Naive thymus-derived CD4-positive, alpha-beta T cell (primary cell): ENCODE measurements at regions of chr7 and their contacts with region 1.

Region 1: GRCh38 chr7:30062591-30062990 is 34.4 kb downstream of the PLEKHA8 start:
- DNase-seq: peak in 5 of 9 donors; percentile 17 to 36 (median 19)
- ATAC-seq: peak; percentile 76
- H3K4me3 ChIP-seq: no peak overlapping the region
- H3K4me3 Mint-ChIP-seq: no peak overlapping the region
- H3K27ac ChIP-seq: no peak overlapping the region
- H3K27ac Mint-ChIP-seq: no peak overlapping the region
- H3K4me1 ChIP-seq: no peaks in the 10 kb centered on the region
- H3K4me1 Mint-ChIP-seq: peaks cover 0 to 12% (median 6%) of the 10 kb centered on the region in 7 donors
- H3K27me3 ChIP-seq: no peaks in the 10 kb centered on the region
- H3K27me3 Mint-ChIP-seq: no peaks in the 10 kb centered on the region

Region 2: GRCh38 chr7:28921822-28922221 is 1140.8 kb before region 1 on chr7:
- CTCF ChIA-PET with region 1: no interaction called
- POLR2A ChIA-PET with region 1: no interaction called
- intact Hi-C with region 1: loop called (anchors 2 to 10 kb)
- DNase-seq: peak in 7 of 9 donors; percentile 17 to 56 (median 39)
- ATAC-seq: peak; percentile 88
- H3K4me3 ChIP-seq: no peak overlapping the region
- H3K4me3 Mint-ChIP-seq: peak overlapping the region in 1 of 10 donors; percentile 16
- H3K27ac ChIP-seq: no peak overlapping the region
- H3K27ac Mint-ChIP-seq: no peak overlapping the region
- H3K4me1 ChIP-seq: peaks cover 0 to 8% of the 10 kb centered on the region in 2 donors
- H3K4me1 Mint-ChIP-seq: peaks cover 0 to 23% (median 14%) of the 10 kb centered on the region in 7 donors
- H3K27me3 ChIP-seq: no peaks in the 10 kb centered on the region
- H3K27me3 Mint-ChIP-seq: peaks cover 0 to 22% (median 0%) of the 10 kb centered on the region in 5 donors

Region 3: GRCh38 chr7:28980451-28980891 is 1082.1 kb before region 1 on chr7:
- CTCF ChIA-PET with region 1: no interaction called
- POLR2A ChIA-PET with region 1: no interaction called
- intact Hi-C with region 1: no loop called
- DNase-seq: no peak
- ATAC-seq: no peak
- H3K4me3 ChIP-seq: no peak overlapping the region
- H3K4me3 Mint-ChIP-seq: no peak overlapping the region
- H3K27ac ChIP-seq: no peak overlapping the region
- H3K27ac Mint-ChIP-seq: no peak overlapping the region
- H3K4me1 ChIP-seq: no peaks in the 10 kb centered on the region
- H3K4me1 Mint-ChIP-seq: no peaks in the 10 kb centered on the region
- H3K27me3 ChIP-seq: no peaks in the 10 kb centered on the region
- H3K27me3 Mint-ChIP-seq: peaks cover 0 to 27% (median 24%) of the 10 kb centered on the region in 5 donors

Region 4: GRCh38 chr7:29748286-29749108 is 314.1 kb before region 1 on chr7:
- CTCF ChIA-PET with region 1: no interaction called
- POLR2A ChIA-PET with region 1: no interaction called
- intact Hi-C with region 1: loop called in 1 of 2 experiments (anchors 1 kb)
- DNase-seq: peak in 1 of 9 donors; percentile 5
- ATAC-seq: no peak
- H3K4me3 ChIP-seq: no peak overlapping the region
- H3K4me3 Mint-ChIP-seq: no peak overlapping the region
- H3K27ac ChIP-seq: no peak overlapping the region
- H3K27ac Mint-ChIP-seq: no peak overlapping the region
- H3K4me1 ChIP-seq: no peaks in the 10 kb centered on the region
- H3K4me1 Mint-ChIP-seq: no peaks in the 10 kb centered on the region
- H3K27me3 ChIP-seq: no peaks in the 10 kb centered on the region
- H3K27me3 Mint-ChIP-seq: peaks cover 0 to 21% (median 5%) of the 10 kb centered on the region in 5 donors

Region 5: DNA sequence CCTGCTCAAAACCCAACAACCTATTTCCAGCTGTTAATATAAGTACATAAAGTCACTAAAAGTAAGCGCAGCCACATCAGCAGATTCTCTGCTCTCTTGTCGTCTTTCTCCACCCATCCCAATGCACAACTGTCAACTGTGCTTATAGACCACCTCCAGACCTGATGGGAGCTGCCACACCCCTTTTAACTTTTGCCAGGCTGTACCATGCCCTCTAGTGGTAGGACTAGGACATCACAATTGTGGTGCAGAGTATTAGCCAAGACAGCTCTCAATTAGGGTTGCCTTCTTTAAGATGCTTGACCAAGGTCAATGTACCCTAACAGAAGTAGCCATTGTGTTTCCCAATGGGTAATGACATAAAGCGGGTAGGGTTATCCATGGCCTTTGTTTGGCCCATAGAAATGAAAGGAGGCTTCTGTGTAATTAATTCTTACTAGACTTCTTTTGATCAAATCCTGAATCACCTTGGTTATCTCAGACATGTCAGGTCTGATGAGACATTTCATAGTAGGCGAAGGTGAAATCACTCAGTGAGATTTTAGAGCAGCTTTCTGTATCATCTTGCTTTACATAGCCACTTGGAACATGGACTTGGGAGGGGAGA is 141.1 kb before region 1 on chr7:
- CTCF ChIA-PET with region 1: interaction called, 4 read pairs
- POLR2A ChIA-PET with region 1: no interaction called
- intact Hi-C with region 1: loop called (anchors 1 to 5 kb)
- DNase-seq: peak in 8 of 9 donors; percentile 11 to 55 (median 38)
- ATAC-seq: peak; percentile 93
- H3K4me3 ChIP-seq: no peak overlapping the region
- H3K4me3 Mint-ChIP-seq: no peak overlapping the region
- H3K27ac ChIP-seq: no peak overlapping the region
- H3K27ac Mint-ChIP-seq: no peak overlapping the region
- H3K4me1 ChIP-seq: no peaks in the 10 kb centered on the region
- H3K4me1 Mint-ChIP-seq: peaks cover 0 to 2% (median 0%) of the 10 kb centered on the region in 7 donors
- H3K27me3 ChIP-seq: no peaks in the 10 kb centered on the region
- H3K27me3 Mint-ChIP-seq: peaks cover 0 to 12% (median under 1%) of the 10 kb centered on the region in 5 donors

Region 6: GRCh38 chr7:30019387-30019786 is 43.2 kb before region 1 on chr7:
- CTCF ChIA-PET with region 1: interaction called, 5 read pairs
- POLR2A ChIA-PET with region 1: no interaction called
- intact Hi-C with region 1: loop called in 1 of 2 experiments (anchors 1 kb)
- DNase-seq: no peak
- ATAC-seq: no peak
- H3K4me3 ChIP-seq: no peak overlapping the region
- H3K4me3 Mint-ChIP-seq: no peak overlapping the region
- H3K27ac ChIP-seq: no peak overlapping the region
- H3K27ac Mint-ChIP-seq: no peak overlapping the region
- H3K4me1 ChIP-seq: no peaks in the 10 kb centered on the region
- H3K4me1 Mint-ChIP-seq: peaks cover 10 to 20% (median 13%) of the 10 kb centered on the region in 7 donors
- H3K27me3 ChIP-seq: no peaks in the 10 kb centered on the region
- H3K27me3 Mint-ChIP-seq: no peaks in the 10 kb centered on the region

Region 7: DNA sequence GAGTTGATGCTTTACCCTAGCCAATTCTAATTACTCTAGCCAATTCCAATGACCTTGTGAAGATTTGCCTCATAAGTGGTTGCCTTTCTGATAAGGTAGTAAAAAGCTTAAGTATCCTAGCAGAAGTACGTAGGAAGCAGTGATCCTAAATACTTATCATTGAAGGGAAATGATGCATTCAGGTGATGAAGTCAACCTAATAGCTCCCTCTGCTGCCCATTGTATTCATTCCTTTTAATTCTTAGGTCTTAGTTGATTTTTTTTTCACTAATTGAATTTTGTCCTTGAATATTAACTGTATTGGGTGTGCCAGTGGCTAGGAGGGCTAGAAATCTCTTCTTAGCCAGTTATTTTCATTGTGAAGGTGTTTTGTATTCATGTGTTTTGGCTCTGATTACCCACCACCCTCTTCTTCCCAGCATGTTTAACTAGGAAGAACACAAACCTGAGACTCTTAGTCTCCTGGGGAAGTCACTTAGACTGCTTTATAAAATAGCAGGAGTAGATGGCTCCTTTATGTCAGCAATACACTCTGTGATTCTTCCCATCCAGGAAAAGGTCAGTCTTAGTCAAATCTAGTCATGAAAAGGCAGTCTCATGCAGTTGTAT is 11.9 kb after region 1 on chr7:
- CTCF ChIA-PET with region 1: interaction called, 13 read pairs
- POLR2A ChIA-PET with region 1: no interaction called
- intact Hi-C with region 1: no loop called
- DNase-seq: peak in 3 of 9 donors; percentile 4 to 16 (median 11)
- ATAC-seq: no peak
- H3K4me3 ChIP-seq: no peak overlapping the region
- H3K4me3 Mint-ChIP-seq: no peak overlapping the region
- H3K27ac ChIP-seq: no peak overlapping the region
- H3K27ac Mint-ChIP-seq: no peak overlapping the region
- H3K4me1 ChIP-seq: no peaks in the 10 kb centered on the region
- H3K4me1 Mint-ChIP-seq: no peaks in the 10 kb centered on the region
- H3K27me3 ChIP-seq: no peaks in the 10 kb centered on the region
- H3K27me3 Mint-ChIP-seq: no peaks in the 10 kb centered on the region

Region 8: DNA sequence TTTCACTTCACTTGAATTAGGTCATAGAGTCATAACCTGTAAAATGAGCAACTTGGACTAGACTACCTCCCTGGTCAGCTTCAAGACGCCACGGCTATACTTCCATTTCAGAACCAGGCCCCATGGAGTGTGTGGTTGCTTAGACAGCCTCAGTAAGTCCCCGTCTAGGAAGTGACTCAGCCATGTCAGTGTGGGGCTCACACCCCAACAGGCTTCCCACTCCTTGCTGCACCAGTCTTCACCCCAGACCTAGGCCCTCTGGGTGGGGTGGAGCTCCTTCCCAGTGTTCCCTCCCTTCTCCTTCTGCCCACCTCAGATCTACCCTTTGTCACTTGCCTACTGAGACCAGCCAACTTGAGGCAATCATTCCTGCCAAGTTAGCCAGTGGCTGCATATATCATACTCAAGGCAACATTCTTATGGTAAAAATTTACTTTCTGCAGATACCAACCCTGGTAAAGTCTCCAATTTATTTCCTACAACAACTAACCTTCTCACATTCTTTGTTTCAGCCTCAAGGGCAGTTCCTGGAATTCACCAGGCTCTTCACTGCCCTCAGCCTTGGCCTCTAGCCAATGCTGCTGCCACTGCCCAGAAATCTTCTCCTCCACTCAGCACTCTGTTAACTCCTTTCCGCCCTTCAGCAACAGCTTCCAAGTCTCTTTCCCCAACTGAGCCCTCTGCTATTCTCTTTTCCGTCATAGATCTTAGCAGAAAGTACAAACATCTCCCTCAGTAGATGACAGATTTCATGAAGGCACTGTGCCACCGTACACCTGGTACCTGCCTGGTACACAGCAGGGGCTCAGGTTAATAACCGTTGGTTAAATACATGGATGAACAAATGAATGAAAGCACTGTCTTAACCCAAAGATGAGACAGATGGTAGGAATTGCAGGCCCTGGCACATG is 190.5 kb after region 1 on chr7:
- CTCF ChIA-PET with region 1: no interaction called
- POLR2A ChIA-PET with region 1: no interaction called
- intact Hi-C with region 1: no loop called
- DNase-seq: no peak
- ATAC-seq: peak; percentile 73
- H3K4me3 ChIP-seq: no peak overlapping the region
- H3K4me3 Mint-ChIP-seq: no peak overlapping the region
- H3K27ac ChIP-seq: no peak overlapping the region
- H3K27ac Mint-ChIP-seq: peak overlapping the region in 3 of 9 donors; percentile 5 to 76 (median 37)
- H3K4me1 ChIP-seq: peaks cover 0 to 10% of the 10 kb centered on the region in 2 donors
- H3K4me1 Mint-ChIP-seq: peaks cover 12 to 40% (median 26%) of the 10 kb centered on the region in 7 donors
- H3K27me3 ChIP-seq: no peaks in the 10 kb centered on the region
- H3K27me3 Mint-ChIP-seq: no peaks in the 10 kb centered on the region

Region 9: DNA sequence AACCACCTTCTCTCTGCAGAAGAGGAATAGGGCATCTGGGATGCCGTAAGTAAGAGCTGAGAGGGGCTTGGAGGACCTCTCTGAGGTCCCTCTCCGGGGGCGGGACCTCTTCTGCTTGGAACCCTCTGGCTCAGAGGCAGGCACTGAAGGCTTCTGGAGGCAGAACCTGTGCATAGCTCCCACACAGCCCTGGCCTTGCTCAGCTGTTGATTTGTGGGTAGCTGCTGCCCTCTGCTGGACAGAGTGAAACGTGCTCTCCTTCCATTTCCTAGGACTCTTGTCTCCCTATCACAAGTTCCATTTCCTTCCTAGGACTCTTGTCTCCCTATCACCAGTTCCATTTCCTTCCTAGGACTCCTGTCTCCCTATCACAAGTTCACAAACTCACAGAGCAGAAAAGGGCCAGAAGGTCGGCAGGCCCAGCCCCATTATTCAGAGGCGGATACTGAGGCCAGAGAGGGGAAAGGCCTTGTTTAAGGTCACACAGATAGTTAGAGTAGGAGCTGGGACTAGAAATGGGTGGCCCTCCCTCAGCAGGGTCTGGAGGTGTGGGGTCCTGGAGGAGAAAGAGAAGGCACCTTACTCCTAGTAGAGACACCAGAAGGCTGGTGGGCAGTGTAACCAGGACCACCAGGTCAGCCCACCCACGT is 501.8 kb after region 1 on chr7:
- CTCF ChIA-PET with region 1: interaction called, 5 read pairs
- POLR2A ChIA-PET with region 1: no interaction called
- intact Hi-C with region 1: loop called in 1 of 2 experiments (anchors 1 kb)
- DNase-seq: peak; percentile 45 to 77 (median 66)
- ATAC-seq: peak; percentile 98
- H3K4me3 ChIP-seq: no peak overlapping the region
- H3K4me3 Mint-ChIP-seq: peak overlapping the region in 1 of 10 donors; percentile 9
- H3K27ac ChIP-seq: no peak overlapping the region
- H3K27ac Mint-ChIP-seq: peak overlapping the region in 3 of 9 donors; percentile 3 to 39 (median 5)
- H3K4me1 ChIP-seq: no peaks in the 10 kb centered on the region
- H3K4me1 Mint-ChIP-seq: peaks cover 0 to 4% (median 0%) of the 10 kb centered on the region in 7 donors
- H3K27me3 ChIP-seq: no peaks in the 10 kb centered on the region
- H3K27me3 Mint-ChIP-seq: no peaks in the 10 kb centered on the region